ENCODE measurements at regions of chrX and their contacts with region 1.

Region 1: GRCh38 chrX:24395775-24396174 is 35.3 kb downstream of the SUPT20HL1 start:
- DNase-seq: peak; percentile 56 to 64 (median 60)
- H3K4me3 ChIP-seq: no peak overlapping the region
- H3K4me3 Mint-ChIP-seq: no peak overlapping the region
- H3K27ac ChIP-seq: no peak overlapping the region
- H3K27ac Mint-ChIP-seq: peak overlapping the region in 1 of 7 donors; percentile 51
- H3K4me1 ChIP-seq: no peaks in the 10 kb centered on the region
- H3K4me1 Mint-ChIP-seq: peaks cover 0 to 6% (median 2%) of the 10 kb centered on the region in 4 donors
- H3K27me3 ChIP-seq: no peaks in the 10 kb centered on the region
- H3K27me3 Mint-ChIP-seq: peaks cover 5 to 7% of the 10 kb centered on the region in 2 donors

Region 2: DNA sequence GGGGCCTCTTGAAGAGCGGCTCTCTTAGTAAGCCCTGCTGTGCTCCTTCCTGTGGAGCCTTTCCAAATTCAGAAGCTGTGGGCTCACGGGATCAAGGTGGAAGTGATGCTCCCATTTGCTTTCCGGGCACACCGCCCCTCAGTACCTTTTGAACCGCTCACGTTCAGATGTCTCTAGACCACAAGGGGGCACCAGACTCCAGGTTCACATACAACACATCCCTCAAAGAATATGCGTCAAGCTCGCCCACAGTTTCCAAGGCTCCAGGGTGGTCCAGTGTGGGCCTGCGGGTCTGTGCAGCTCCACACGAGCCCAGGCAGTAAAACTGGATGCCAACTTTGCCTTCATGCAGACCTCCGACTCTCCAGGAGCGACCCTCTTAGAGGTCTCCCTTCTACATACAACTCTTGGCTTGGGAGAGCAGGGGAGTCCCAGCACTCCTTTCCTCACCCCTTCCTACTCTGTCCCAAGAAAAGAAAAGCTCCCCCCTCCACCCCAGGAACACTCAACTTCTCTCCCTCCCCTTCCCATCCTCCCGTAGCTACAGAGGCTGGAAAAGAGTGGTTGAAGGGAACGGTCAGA is 24.3 kb before region 1 on chrX:
- CTCF ChIA-PET with region 1: interaction called, 20 read pairs
- POLR2A ChIA-PET with region 1: no interaction called
- intact Hi-C with region 1: no loop called
- DNase-seq: peak; percentile 43 to 57 (median 56)
- H3K4me3 ChIP-seq: no peak overlapping the region
- H3K4me3 Mint-ChIP-seq: peak overlapping the region; percentile 18 to 75 (median 48)
- H3K27ac ChIP-seq: no peak overlapping the region
- H3K27ac Mint-ChIP-seq: peak overlapping the region in 1 of 7 donors; percentile 0
- H3K4me1 ChIP-seq: peaks cover 3% of the 10 kb centered on the region
- H3K4me1 Mint-ChIP-seq: peaks cover 5 to 12% (median 8%) of the 10 kb centered on the region in 4 donors
- H3K27me3 ChIP-seq: no peaks in the 10 kb centered on the region
- H3K27me3 Mint-ChIP-seq: peaks cover 0 to 9% of the 10 kb centered on the region in 2 donors

Region 3: DNA sequence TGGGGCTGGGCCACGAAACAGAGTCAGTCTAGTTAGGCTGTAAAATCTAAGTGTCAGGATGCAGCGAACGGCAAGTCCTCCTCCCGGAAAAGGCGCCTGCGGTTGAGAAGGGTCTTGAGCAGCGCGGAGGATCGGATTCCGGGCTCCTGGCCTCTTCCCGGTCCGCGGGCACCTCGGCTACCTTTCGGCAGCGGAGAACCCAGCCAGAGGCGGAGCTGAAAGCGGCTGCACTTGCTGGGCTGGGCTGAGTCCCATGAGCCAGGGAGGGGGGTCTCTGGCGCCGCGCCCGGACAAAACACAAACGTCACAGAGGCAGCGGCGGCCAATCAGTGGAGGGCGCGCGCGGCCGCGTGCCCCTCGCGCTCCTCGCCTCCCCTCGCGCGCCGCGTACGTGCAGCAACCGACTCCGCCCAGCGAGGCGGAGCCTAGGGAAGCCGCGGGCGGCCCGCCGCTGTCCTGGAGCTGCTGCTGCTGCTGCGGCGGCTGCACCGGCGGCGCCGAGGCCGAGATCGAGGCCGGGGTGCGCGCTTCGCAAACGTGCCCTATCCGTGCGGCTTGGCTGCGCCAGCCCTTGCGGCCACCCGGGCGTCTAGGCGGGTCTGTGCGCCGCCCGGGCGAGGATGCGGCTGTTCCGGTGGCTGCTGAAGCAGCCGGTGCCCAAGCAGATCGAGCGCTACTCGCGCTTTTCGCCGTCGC is 69.2 kb after region 1 on chrX and contains the start of gene PDK3:
- CTCF ChIA-PET with region 1: interaction called, 8 read pairs
- POLR2A ChIA-PET with region 1: interaction called, 5 read pairs
- intact Hi-C with region 1: loop called (anchors 1 kb)
- DNase-seq: peak; percentile 89 to 91 (median 91)
- H3K4me3 ChIP-seq: peak within 1 kb of the TSS; percentile 44 to 62
- H3K4me3 Mint-ChIP-seq: peak within 1 kb of the TSS; percentile 81 to 90 (median 87)
- H3K27ac ChIP-seq: peak within 1 kb of the TSS; percentile 87
- H3K27ac Mint-ChIP-seq: peak within 1 kb of the TSS; percentile 89 to 97 (median 92)
- H3K4me1 ChIP-seq: peaks cover 40% of the 10 kb centered on the region
- H3K4me1 Mint-ChIP-seq: peaks cover 16 to 42% (median 28%) of the 10 kb centered on the region in 4 donors
- H3K27me3 ChIP-seq: no peaks in the 10 kb centered on the region
- H3K27me3 Mint-ChIP-seq: no peaks in the 10 kb centered on the region
- total RNA-seq, gene PDK3: 30.3 to 31.1 TPM

Region 4: GRCh38 chrX:24479924-24480323 is 84.1 kb after region 1 on chrX:
- CTCF ChIA-PET with region 1: interaction called, 7 read pairs
- POLR2A ChIA-PET with region 1: no interaction called
- intact Hi-C with region 1: loop called (anchors 1 kb)
- DNase-seq: peak; percentile 77 to 94 (median 89)
- H3K4me3 ChIP-seq: peak overlapping the region in 1 of 2 donors; percentile 44
- H3K4me3 Mint-ChIP-seq: peak overlapping the region; percentile 53 to 86 (median 74)
- H3K27ac ChIP-seq: peak overlapping the region; percentile 82
- H3K27ac Mint-ChIP-seq: peak overlapping the region; percentile 86 to 97 (median 92)
- H3K4me1 ChIP-seq: peaks cover 83% of the 10 kb centered on the region
- H3K4me1 Mint-ChIP-seq: peaks cover 42 to 89% (median 64%) of the 10 kb centered on the region in 4 donors
- H3K27me3 ChIP-seq: no peaks in the 10 kb centered on the region
- H3K27me3 Mint-ChIP-seq: no peaks in the 10 kb centered on the region

Region 5: DNA sequence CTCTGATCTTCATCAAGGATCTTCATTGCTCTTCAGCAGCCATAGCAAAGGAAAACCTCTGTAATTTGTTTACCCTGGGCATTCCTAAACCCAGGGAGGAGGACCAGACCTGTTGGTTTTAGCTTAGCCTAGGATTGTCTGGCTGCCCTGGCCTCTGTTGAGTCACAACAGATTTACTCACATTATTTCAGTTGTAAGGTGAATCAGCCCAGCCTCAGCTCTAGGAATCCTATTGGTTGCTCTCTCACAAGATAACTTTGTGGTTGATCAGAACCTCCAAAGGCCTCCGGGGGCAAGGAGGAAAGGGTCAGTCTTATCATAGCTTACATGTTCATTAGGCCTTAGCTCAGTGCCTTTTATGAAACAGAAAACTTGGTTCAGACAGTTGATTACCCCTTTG is 110.3 kb after region 1 on chrX:
- CTCF ChIA-PET with region 1: interaction called, 319 read pairs
- POLR2A ChIA-PET with region 1: no interaction called
- intact Hi-C with region 1: no loop called
- DNase-seq: no peak
- H3K4me3 ChIP-seq: no peak overlapping the region
- H3K4me3 Mint-ChIP-seq: no peak overlapping the region
- H3K27ac ChIP-seq: no peak overlapping the region
- H3K27ac Mint-ChIP-seq: no peak overlapping the region
- H3K4me1 ChIP-seq: no peaks in the 10 kb centered on the region
- H3K4me1 Mint-ChIP-seq: peaks cover 0 to 1% (median 0%) of the 10 kb centered on the region in 4 donors
- H3K27me3 ChIP-seq: no peaks in the 10 kb centered on the region
- H3K27me3 Mint-ChIP-seq: no peaks in the 10 kb centered on the region